ENCODE measurements at regions of chr2 and their contacts with region 1.

Region 1: DNA sequence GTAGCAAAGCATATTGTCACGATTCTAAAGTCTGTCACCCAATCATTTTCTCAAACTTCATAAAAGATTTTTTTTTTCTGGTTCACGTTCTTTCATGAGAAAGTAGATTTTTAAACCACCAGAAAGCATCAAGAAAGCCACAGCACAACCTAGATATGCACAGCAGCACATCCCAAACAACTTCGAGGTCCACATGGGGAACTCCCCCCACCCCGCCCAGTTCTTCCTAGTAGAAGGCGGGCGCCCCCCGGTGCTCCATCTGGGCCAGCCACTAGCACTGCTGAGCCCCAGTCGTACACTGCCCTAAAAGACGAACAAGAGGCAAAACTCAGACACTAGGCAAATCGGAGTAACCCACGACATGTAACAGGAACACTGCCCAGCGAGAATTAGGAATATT is 15.5 kb downstream of the HDLBP start:
- DNase-seq: no peak
- ATAC-seq: peak; percentile 25; the same call in 2 of the 3 replicates
- H3K4me3 ChIP-seq: no peak overlapping the region
- H3K27ac ChIP-seq: no peak overlapping the region
- H3K4me1 ChIP-seq: peaks cover 53% of the 10 kb centered on the region
- H3K27me3 ChIP-seq: no peaks in the 10 kb centered on the region
- CTCF ChIP-seq: peak; percentile 47
- EP300 ChIP-seq: no peak
- POLR2A ChIP-seq: no peak
- RAD21 ChIP-seq: no peak

Region 2: DNA sequence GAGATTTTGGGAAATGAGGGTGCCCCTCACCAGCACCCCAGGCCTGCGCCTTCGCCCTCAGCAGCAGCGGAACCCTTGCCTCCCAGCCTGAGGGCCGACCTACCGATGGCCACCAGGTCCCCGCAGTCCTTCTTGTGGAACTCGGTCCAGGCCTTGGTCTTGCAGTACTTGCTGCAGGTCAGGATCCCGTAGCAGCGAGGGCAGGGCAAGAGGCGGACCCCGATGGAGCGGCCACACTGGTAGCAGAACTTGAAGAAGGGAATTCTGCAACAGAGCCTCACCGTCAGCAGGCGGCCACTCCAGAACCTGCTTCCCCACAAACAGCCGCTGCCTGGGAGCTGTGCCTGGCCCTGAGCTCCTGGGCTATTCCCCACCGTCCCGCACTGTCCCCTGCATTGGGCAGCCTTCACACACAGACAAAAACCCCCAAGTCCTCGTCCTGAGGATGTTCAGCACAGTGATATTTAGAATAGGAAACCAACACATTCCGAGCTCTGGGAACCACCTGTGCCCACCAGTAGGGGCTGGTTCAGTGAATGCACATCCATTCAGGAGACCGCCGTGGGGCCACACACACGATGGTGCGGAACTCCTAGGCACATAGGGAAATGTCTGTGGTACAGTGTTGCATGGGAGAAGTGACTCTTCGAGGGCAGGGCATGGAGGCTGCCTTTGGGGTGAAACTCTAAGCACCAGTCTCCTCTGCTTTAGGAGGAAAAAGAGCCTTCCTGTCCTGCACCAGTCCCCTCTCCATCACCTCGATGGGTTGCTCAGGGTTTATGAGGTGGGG is 819.0 kb before region 1 on chr2:
- CTCF ChIA-PET with region 1: no interaction called
- POLR2A ChIA-PET with region 1: no interaction called
- in situ Hi-C with region 1: no loop called
- intact Hi-C with region 1: no loop called
- DNase-seq: no peak
- ATAC-seq: peak; percentile 16; the same call in 1 of the 3 replicates
- H3K4me3 ChIP-seq: no peak overlapping the region
- H3K27ac ChIP-seq: no peak overlapping the region
- H3K4me1 ChIP-seq: no peaks in the 10 kb centered on the region
- H3K27me3 ChIP-seq: no peaks in the 10 kb centered on the region
- CTCF ChIP-seq: no peak
- EP300 ChIP-seq: no peak
- POLR2A ChIP-seq: no peak
- RAD21 ChIP-seq: no peak

Region 3: DNA sequence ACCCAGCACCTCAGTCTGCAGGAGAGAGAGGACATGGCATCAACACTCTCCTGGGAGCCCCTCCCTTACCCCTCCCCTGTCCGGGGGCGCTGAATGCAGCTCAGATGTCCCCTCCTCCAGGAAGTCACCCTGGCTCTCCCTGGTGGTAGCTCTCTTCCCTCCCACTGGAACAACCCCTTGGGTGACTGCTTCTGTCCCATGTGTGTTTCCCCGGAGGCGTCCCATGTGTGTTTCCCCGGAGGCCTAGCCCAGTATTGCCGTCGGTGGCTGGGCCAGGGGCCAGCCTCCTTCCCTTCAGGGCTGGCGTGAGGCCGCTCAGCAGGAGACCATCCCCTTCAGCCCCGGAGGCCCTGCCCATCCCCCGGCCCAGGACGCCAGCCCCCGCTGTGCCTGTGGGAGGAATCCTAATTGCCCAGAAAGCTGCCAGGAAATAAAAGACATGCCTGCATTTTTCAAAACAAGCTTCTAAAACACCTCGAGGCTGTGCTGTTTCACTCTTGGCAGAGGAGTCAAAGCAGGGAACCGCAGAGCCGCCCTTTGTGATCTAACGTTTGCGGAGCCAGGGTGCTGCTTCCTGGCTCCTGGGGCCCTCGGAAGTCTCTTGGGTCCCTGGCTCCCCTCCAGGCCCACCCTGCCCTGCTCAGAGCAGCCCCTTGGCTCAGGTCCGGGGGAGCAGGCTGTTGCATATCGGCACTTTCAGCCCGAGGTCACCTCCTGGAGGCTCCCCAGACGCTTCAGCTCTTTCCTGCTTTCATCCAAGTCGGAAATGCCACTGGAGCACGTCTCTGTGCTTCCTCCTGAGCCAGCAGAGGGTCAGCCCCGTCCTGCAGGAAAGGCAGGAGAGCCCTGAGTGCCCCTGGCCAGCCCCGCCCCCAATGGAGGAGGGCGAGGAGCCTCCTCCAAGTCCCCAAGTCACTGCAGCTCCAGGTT is 290.1 kb before region 1 on chr2:
- CTCF ChIA-PET with region 1: no interaction called
- POLR2A ChIA-PET with region 1: no interaction called
- in situ Hi-C with region 1: no loop called
- intact Hi-C with region 1: loop called (anchors 5 kb)
- DNase-seq: no peak
- ATAC-seq: peak; percentile 67
- H3K4me3 ChIP-seq: peak overlapping the region; percentile 23 to 67 (median 37); a peak in 5 of 6 replicates
- H3K27ac ChIP-seq: no peak overlapping the region
- H3K4me1 ChIP-seq: peaks cover 16% of the 10 kb centered on the region
- H3K27me3 ChIP-seq: peaks cover 2 to 34% of the 10 kb centered on the region in 2 experiments; a peak in 4 of 5 replicates
- CTCF ChIP-seq: no peak; the same call in 1 of the 2 replicates
- EP300 ChIP-seq: no peak
- POLR2A ChIP-seq: no peak
- RAD21 ChIP-seq: no peak

Region 4: GRCh38 chr2:241289597-241289996 is 10.4 kb before region 1 on chr2:
- CTCF ChIA-PET with region 1: no interaction called
- POLR2A ChIA-PET with region 1: interaction called, 10 read pairs
- in situ Hi-C with region 1: no loop called
- intact Hi-C with region 1: no loop called
- DNase-seq: no peak
- ATAC-seq: no peak
- H3K4me3 ChIP-seq: no peak overlapping the region
- H3K27ac ChIP-seq: no peak overlapping the region
- H3K4me1 ChIP-seq: peaks cover 62% of the 10 kb centered on the region
- H3K27me3 ChIP-seq: no peaks in the 10 kb centered on the region
- CTCF ChIP-seq: peak; percentile 31
- EP300 ChIP-seq: no peak
- POLR2A ChIP-seq: no peak
- RAD21 ChIP-seq: no peak

Measured in HepG2 (cell line).